Common myeloid progenitor, CD34-positive (primary cell): ENCODE measurements at regions of chr4 and their contacts with region 1.

Region 1: GRCh38 chr4:57163530-57164459 is 53.6 kb upstream of the IGFBP7 start:
- DNase-seq: peak; percentile 73 to 84 (median 80)
- H3K4me3 ChIP-seq: peak overlapping the region; percentile 50 to 92 (median 79)
- H3K27ac ChIP-seq: no peak overlapping the region
- H3K4me1 ChIP-seq: peaks cover 0 to 11% (median 7%) of the 10 kb centered on the region in 4 experiments
- H3K27me3 ChIP-seq: peaks cover 2 to 10% (median 4%) of the 10 kb centered on the region in 5 experiments

Region 2: DNA sequence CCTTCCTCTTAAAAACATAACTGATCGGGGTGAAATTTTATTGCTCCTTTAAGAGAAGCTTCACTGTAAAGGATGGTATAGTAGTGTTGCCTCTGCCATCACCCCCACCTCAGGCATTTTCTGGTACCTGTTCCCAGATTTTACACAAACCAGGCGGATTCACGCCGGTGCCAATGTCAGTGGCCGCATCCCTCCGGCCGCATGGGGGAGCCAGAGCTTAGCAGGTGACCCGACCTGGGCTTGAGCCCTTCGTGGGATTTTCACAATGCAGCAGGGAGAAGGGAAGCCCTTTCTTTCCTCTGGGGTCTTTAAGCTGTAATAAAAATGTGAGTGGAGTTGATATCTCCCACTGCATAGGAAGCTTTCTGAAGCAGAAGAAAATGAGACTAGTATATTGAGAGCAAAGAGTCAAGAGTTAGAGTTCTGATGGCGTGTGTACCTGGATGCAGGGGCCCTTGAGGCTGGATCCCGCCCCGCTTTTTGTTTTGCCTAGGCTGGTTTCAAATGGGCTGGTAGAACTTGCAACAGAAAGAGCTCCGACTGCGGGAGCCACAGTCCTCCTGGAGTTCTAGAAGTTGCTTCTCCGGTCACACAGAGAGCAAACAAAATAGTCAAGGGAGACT is 125.7 kb before region 1 on chr4:
- CTCF ChIA-PET with region 1: interaction called, 76 read pairs
- POLR2A ChIA-PET with region 1: no interaction called
- DNase-seq: peak; percentile 30 to 56 (median 51)
- H3K4me3 ChIP-seq: no peak overlapping the region
- H3K27ac ChIP-seq: no peak overlapping the region
- H3K4me1 ChIP-seq: peaks cover 0 to 6% (median 5%) of the 10 kb centered on the region in 4 experiments
- H3K27me3 ChIP-seq: no peaks in the 10 kb centered on the region

Region 3: DNA sequence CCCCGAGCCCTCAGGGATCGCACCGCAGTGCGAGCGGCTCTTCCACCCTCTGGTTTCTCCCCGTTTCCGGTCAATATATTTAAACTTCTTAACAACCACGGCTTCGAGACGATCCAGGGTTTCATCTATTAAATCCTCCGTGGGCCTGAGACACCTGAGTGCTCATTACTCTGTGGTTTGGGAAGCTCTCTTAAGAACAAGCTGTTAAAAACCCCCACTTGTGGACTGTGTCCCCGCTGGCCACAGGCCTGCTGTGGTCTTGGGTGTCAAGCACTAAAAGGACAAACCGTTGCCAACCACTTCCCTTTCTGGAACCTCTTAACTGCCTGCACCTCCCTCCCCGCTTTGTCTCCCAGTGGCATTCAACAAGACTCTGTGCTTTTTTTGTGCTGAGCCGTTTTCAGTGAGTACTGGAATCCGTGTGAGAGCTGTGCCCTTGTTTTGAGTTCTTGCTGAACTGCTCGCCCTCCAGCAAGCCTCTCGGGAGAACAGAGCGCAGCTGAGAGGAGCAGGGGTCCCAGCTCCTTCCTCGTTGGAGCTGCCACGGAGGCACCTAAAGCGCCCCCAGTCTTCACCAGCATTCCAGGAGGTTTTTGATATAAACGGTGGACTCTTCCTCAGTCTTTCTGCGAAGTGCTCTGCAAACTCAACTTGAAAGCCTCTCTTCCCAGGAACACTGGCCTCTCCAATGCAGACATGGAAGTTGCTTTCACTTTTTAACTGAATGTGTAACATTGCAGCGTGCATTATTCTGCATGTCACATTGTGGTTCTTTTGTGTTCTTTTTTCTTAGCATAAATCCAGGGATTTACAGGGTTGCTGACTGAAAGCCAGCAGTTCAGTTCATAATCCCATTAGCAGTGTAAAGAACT is 52.9 kb before region 1 on chr4:
- CTCF ChIA-PET with region 1: interaction called, 33 read pairs
- POLR2A ChIA-PET with region 1: interaction called, 3 read pairs
- DNase-seq: peak; percentile 87 to 99 (median 98)
- H3K4me3 ChIP-seq: peak overlapping the region; percentile 58 to 93 (median 87)
- H3K27ac ChIP-seq: peak overlapping the region; percentile 84 to 94
- H3K4me1 ChIP-seq: peaks cover 9 to 73% (median 64%) of the 10 kb centered on the region in 4 experiments
- H3K27me3 ChIP-seq: no peaks in the 10 kb centered on the region

Region 4: GRCh38 chr4:57190601-57191481 is 27.0 kb after region 1 on chr4:
- CTCF ChIA-PET with region 1: interaction called, 16 read pairs
- POLR2A ChIA-PET with region 1: no interaction called
- DNase-seq: peak; percentile 21 to 42 (median 39)
- H3K4me3 ChIP-seq: no peak overlapping the region
- H3K27ac ChIP-seq: no peak overlapping the region
- H3K4me1 ChIP-seq: peaks cover 0 to 6% (median 2%) of the 10 kb centered on the region in 4 experiments
- H3K27me3 ChIP-seq: peaks cover 0 to 20% (median 12%) of the 10 kb centered on the region in 5 experiments